Activated CD4-positive, alpha-beta memory T cell treated with anti-CD3 and anti-CD28 coated beads for 36 hours (primary cell): ENCODE measurements at regions of chr7 and their contacts with region 1.

Region 1: GRCh38 chr7:4681886-4682620 is at the start of gene FOXK1:
- DNase-seq: peak; percentile 82
- H3K4me3 Mint-ChIP-seq: peak within 1 kb of the TSS; percentile 78
- H3K27ac Mint-ChIP-seq: peak within 1 kb of the TSS; percentile 89
- H3K4me1 Mint-ChIP-seq: peaks cover 25% of the 10 kb centered on the region
- H3K27me3 Mint-ChIP-seq: peaks cover 2% of the 10 kb centered on the region
- total RNA-seq, gene FOXK1: 25.9 to 26.6 TPM

Region 2: GRCh38 chr7:4610768-4611467 is 71.1 kb before region 1 on chr7:
- CTCF ChIA-PET with region 1: interaction called, 3 read pairs
- POLR2A ChIA-PET with region 1: no interaction called
- intact Hi-C with region 1: loop called (anchors 2 kb)
- DNase-seq: peak; percentile 56
- H3K4me3 Mint-ChIP-seq: no peak overlapping the region
- H3K27ac Mint-ChIP-seq: no peak overlapping the region
- H3K4me1 Mint-ChIP-seq: peaks cover 9% of the 10 kb centered on the region
- H3K27me3 Mint-ChIP-seq: no peaks in the 10 kb centered on the region

Region 3: GRCh38 chr7:4641667-4642467 is 40.2 kb before region 1 on chr7:
- CTCF ChIA-PET with region 1: interaction called, 43 read pairs
- POLR2A ChIA-PET with region 1: interaction called, 54 read pairs
- intact Hi-C with region 1: loop called (anchors 1 kb)
- DNase-seq: peak; percentile 96
- H3K4me3 Mint-ChIP-seq: peak overlapping the region; percentile 87
- H3K27ac Mint-ChIP-seq: peak overlapping the region; percentile 91
- H3K4me1 Mint-ChIP-seq: peaks cover 12% of the 10 kb centered on the region
- H3K27me3 Mint-ChIP-seq: no peaks in the 10 kb centered on the region

Region 4: DNA sequence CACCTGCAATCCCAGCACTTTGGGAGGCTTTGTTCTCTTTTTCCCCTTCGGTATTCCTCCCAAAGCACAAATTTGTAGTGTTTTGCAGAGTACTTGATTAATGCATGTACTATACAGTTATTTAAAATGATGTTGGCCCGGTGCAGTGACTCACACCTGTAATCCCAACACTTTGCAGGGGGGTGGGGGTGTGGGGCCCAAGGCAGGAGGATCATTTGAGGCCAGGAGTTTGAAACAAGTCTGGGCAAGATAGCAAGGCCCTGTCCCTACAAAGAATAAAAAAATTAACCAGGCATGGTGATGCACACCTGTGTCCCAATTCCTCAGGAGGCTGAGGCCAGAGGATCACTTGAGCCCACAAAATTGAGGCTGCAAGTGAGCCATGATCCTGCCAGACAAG is 26.7 kb before region 1 on chr7:
- CTCF ChIA-PET with region 1: no interaction called
- POLR2A ChIA-PET with region 1: no interaction called
- intact Hi-C with region 1: no loop called
- DNase-seq: no peak
- H3K4me3 Mint-ChIP-seq: no peak overlapping the region
- H3K27ac Mint-ChIP-seq: no peak overlapping the region
- H3K4me1 Mint-ChIP-seq: no peaks in the 10 kb centered on the region
- H3K27me3 Mint-ChIP-seq: no peaks in the 10 kb centered on the region

Region 5: GRCh38 chr7:4738711-4739527 is 56.9 kb after region 1 on chr7:
- CTCF ChIA-PET with region 1: no interaction called
- POLR2A ChIA-PET with region 1: no interaction called
- intact Hi-C with region 1: loop called (anchors 1 kb)
- DNase-seq: peak; percentile 35
- H3K4me3 Mint-ChIP-seq: peak overlapping the region; percentile 40
- H3K27ac Mint-ChIP-seq: peak overlapping the region; percentile 75
- H3K4me1 Mint-ChIP-seq: peaks cover 29% of the 10 kb centered on the region
- H3K27me3 Mint-ChIP-seq: no peaks in the 10 kb centered on the region

Region 6: DNA sequence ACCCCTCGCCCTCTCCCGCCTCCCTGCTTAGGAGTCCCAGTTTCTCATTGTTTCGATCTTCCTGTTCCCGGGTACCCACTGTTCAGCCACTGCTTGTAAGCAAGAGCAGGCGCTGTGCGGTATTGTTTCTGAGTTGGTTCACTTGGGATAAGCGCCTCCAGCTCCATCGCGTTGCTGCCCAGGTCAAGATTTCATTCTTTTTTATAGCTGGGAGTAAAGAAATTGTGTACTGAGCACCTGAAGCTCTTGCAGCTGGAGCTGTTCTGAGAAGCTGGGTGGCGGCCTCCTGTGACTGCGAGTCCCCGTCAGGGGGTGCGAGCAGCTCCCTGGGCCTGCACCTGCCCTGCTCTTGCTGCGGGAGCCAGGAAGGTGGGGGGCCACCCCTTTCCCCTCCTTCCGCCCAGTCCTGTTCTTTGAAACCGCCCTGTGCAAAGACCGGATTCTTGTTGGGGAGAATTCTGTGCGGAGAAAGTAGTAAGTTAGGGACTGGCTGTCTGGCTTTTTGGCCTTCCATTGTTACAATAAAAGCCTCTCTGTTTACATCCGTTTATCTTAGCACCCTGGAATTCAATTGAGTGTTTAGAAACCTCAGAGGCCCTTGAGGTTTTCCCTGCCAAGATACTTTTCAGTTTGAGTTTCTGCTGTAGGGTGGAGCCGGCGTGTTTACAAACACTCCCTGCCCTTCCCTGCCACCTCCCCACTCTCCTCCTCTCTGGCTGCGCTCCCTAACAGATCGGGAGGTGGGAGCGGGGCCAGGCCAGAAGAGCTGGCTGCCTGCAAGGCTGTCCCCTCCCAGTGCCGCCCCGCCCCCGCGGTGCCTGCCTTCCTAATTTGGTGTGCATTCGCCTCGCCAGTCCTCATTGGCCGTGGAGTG is 62.6 kb after region 1 on chr7:
- CTCF ChIA-PET with region 1: interaction called, 4 read pairs
- POLR2A ChIA-PET with region 1: interaction called, 5 read pairs
- intact Hi-C with region 1: loop called (anchors 1 kb)
- DNase-seq: peak; percentile 81
- H3K4me3 Mint-ChIP-seq: peak overlapping the region; percentile 81
- H3K27ac Mint-ChIP-seq: peak overlapping the region; percentile 91
- H3K4me1 Mint-ChIP-seq: peaks cover 56% of the 10 kb centered on the region
- H3K27me3 Mint-ChIP-seq: no peaks in the 10 kb centered on the region

Region 7: DNA sequence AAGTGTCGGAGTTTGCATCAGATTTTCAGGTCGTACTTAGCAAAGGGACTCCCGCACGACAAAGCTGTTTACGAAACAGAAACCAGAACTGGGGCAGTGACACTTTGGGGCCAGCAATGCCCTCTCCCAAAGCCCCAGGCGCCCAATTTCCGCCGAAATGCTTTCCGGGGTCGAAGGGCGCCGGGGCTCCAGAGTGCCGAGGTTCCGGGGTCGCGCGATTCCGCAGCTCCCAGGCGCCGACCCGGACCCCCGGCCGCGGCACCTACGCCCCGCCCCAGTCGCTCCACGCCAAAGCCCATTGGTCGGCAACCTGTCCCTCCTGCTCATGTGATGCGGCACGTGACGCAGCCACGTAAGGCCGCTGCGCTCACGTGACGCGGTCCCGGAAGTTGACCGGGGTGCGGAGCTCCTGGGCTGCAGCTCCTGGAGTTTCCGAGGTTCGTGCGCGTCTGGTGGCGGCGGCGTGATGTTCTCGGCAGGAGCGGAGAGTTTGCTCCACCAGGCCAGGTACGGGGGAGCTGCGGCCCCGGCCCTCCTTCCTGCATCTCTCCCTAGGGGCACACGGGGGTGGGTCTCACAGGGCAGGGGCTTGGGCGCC is 93.3 kb after region 1 on chr7 and contains the start of gene AP5Z1:
- CTCF ChIA-PET with region 1: no interaction called
- POLR2A ChIA-PET with region 1: interaction called, 8 read pairs
- intact Hi-C with region 1: loop called (anchors 1 kb)
- DNase-seq: peak; percentile 96
- H3K4me3 Mint-ChIP-seq: peak within 1 kb of the TSS; percentile 95
- H3K27ac Mint-ChIP-seq: peak within 1 kb of the TSS; percentile 91
- H3K4me1 Mint-ChIP-seq: peaks cover 36% of the 10 kb centered on the region
- H3K27me3 Mint-ChIP-seq: no peaks in the 10 kb centered on the region
- total RNA-seq, gene AP5Z1: 21.6 to 24.1 TPM

Region 8: DNA sequence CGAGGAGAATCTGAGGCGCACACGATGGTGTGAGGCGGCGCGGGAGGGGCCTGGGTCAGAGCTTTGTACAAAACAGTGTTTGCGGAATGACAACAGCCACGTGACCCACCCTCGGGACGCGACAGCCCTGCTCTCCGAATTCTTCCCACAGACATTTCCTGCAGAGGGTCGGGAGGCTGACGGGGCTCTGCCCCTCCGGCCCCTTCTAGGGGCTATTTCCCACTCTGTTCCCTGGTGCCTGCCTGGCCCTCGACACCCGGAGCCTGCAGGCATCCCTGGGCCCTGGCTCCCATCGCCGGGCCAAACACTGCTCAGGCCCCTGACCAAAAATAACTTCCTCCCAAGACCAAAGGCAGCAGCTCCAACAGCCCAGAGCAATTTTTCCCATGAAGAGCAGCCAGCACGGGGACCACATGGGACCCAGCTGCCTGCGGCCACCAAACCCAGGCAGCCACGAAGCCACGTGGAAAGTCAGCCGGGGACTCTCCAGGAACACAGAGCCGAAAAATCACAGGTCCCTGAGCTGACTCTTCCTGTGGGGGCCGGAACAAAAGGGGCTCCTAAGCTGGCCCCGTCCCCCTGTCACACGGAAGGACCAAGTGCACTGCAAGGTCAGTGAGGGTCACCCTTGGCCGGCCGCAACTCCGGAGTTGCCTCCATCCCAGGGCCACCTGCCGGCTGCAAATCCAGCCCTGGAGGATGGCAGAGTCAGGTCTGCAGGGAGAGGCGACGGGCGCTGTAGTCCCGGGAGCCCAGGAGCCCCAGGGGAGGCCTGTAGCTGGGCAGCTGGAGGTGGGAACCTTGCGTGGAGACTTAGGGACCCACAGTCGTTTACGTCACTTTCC is 137.7 kb after region 1 on chr7:
- CTCF ChIA-PET with region 1: no interaction called
- POLR2A ChIA-PET with region 1: no interaction called
- intact Hi-C with region 1: no loop called
- DNase-seq: no peak
- H3K4me3 Mint-ChIP-seq: no peak overlapping the region
- H3K27ac Mint-ChIP-seq: no peak overlapping the region
- H3K4me1 Mint-ChIP-seq: no peaks in the 10 kb centered on the region
- H3K27me3 Mint-ChIP-seq: peaks cover 7% of the 10 kb centered on the region